ENCODE measurements at regions of chr10 and their contacts with region 1.

Region 1: DNA sequence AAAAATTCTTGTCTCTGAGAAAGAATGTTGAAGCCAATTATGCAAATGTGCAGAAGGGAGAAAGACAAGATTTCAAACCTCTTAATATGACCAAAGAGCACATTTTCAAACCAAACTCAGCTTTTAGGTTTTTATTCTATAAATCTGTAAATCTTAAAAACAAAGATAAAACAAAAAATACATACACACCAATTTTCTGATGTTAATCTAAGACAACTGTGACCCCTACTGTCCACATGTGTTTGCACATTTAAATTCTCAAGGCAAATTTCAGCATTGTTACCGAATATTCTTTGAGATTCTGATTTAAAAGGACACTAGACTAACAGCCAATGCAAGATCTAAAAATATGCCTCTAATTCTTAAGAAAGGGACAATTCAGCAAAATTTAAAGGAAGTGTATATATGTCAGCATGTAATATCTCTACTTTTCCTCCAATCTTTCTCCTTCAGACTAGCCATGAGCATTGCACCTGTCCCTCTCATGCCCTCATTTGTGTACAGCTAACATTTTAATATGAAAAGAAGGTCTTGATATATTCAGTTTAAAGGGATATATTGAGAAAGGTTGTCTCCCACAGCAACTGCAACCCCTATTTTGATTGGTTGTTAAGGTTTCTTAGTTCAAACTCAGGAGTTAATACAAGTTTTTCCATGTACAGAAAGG is 417.9 kb downstream of the IPMK start:
- DNase-seq: no peak

Region 2: DNA sequence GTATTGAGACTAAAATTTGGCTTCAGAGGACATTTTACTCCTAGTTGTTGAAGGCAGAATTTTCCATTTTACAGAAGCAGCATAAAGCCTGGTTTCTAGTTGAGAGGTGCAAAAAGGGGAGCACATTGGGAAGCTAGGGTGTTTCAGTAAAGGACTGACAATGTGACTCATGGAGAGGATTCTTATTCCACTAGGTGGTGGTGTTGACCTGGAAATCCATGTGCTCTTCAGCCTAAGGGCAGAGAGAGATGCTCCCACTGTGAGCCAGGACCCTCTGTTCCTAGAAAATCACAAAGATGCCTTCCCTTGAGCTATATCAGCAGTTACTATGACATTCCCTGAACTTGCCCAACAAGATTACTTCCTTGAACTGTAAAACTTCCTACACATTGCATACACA is 269.9 kb before region 1 on chr10:
- intact Hi-C with region 1: loop called (anchors 10 kb)
- DNase-seq: no peak

Region 3: GRCh38 chr10:57605948-57606485 is 243.8 kb before region 1 on chr10:
- intact Hi-C with region 1: no loop called
- DNase-seq: no peak

Region 4: GRCh38 chr10:58372607-58373441 is 523.0 kb after region 1 on chr10:
- intact Hi-C with region 1: no loop called
- DNase-seq: no peak